ENCODE measurements at regions of chr4 and their contacts with region 1.

Region 1: GRCh38 chr4:81769244-81769643 is 297.5 kb upstream of the RASGEF1B start:
- DNase-seq: no peak
- H3K4me3 ChIP-seq: no peak overlapping the region
- H3K27ac ChIP-seq: no peak overlapping the region
- H3K4me1 ChIP-seq: no peaks in the 10 kb centered on the region
- H3K27me3 ChIP-seq: no peaks in the 10 kb centered on the region
- CTCF ChIP-seq: no peak
- POLR2A ChIP-seq: no peak

Region 2: GRCh38 chr4:81523672-81524327 is 245.4 kb before region 1 on chr4:
- intact Hi-C with region 1: no loop called
- DNase-seq: no peak
- H3K4me3 ChIP-seq: no peak overlapping the region
- H3K27ac ChIP-seq: no peak overlapping the region
- H3K4me1 ChIP-seq: no peaks in the 10 kb centered on the region
- H3K27me3 ChIP-seq: no peaks in the 10 kb centered on the region
- CTCF ChIP-seq: no peak
- POLR2A ChIP-seq: no peak

Region 3: DNA sequence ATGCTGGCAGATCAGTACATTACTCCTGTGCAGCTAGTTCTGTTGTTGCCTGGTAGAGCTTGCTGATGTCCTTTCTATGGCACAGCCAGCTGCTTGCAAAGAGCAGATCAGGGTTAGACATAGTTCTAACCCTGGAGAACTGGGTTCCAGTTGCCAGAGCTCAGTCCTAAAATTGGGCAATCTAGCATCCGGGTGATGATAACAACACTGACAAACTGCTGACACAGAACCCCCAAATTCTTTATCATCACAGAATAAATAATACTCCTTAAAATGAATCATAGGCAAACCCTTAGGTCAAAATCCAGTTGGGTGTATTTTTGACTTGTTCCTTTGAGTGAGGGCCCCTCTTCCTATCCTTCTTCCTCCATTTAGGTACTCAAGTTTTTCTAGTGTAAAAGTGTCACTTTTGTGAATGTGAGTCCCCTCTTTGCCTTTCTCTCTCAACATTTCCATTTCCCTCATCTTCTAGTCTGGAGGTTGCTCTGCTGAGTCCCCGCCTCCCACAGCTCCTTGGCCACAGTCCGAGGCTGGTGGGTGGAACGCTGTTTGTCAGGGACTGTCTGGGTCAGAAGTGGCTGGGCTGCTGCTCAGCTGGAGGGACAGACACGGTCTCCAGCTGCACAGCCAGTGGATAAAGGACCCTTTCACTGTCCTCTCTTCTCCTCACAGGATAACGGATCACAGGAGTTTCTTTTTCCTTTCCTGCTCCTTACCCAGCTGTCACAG is 203.9 kb before region 1 on chr4:
- intact Hi-C with region 1: no loop called
- DNase-seq: no peak
- H3K4me3 ChIP-seq: peak overlapping the region in 1 of 2 donors; percentile 30
- H3K27ac ChIP-seq: peak overlapping the region; percentile 66
- H3K4me1 ChIP-seq: peaks cover 7% of the 10 kb centered on the region
- H3K27me3 ChIP-seq: no peaks in the 10 kb centered on the region
- CTCF ChIP-seq: no peak
- POLR2A ChIP-seq: no peak

Region 4: DNA sequence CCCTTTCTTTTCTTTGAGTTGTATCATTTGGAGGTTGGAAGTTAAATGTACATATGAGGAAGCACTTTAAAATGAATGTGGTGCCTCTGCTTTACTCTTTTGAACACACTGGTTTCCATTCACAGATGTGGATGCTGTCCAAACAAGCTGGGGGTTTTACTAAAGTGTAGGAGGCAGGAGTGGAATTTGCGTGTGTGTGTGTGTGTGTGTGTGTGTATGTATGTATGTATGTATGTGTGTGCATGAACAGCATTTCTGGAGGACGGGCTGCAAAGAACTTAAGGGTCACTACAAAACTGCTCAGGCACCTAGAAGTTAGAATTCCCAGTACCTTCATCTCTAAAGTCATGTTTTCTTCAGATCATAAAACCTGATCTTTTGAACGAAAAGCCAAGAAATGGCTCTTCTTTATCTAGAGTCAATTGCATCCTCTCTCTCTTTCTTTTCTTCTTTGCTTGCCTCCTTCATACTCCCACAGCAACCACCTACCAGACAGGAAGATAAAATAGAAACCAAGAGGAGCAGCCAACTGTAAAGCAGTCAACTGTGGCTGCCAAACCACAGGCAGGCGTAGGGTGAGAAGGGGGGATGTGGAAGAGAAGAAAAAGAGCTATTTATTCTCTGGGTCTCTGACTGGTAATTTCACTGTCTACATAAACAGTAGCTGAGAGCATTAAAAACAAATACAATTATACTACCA is 120.5 kb before region 1 on chr4:
- intact Hi-C with region 1: loop called (anchors 10 kb)
- DNase-seq: no peak
- H3K4me3 ChIP-seq: no peak overlapping the region
- H3K27ac ChIP-seq: no peak overlapping the region
- H3K4me1 ChIP-seq: no peaks in the 10 kb centered on the region
- H3K27me3 ChIP-seq: no peaks in the 10 kb centered on the region
- CTCF ChIP-seq: no peak
- POLR2A ChIP-seq: no peak